ENCODE measurements at regions of chr1 and their contacts with region 1.

Region 1: GRCh38 chr1:31955917-31956736 is 18.0 kb upstream of the PTP4A2 start:
- DNase-seq: peak; percentile 86

Region 2: DNA sequence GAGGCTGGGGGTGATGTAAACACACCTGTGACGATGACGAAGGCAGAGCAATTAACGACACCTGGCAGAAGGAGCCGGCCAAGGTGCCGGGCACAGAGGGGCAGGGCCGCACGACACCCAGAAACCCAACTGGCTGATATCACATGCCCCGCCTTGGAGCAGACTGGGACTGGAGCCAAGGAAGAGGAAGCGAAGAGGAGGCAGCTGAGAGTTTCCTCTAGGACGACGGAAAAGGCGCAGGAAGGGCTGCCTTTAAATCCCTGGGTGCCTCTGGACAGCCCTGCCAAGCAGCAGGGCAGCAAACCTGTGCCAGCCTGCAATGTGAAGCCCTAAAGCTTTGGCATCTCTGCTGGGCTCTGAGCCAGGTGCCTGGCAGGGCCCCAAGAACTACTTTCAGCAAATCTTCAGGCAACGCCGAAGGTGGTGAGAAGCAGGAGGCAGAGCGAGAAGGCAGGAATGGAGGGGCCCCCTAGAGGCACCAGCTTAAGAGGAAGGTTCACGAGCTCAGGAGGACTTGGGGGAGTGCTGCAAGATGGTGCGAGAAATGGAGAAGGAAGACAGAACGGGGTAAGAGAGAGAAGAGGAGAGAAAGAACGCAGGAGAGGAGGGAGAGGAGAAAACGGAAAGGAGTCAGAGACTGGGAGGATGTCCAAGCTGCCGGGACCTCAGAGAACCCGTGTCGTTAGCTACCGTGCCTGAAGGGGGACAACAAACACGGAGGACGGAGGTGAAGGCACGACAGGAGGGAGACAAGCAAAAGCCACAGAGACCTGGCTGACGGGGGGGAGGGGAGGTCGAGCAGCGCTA is 286.1 kb before region 1 on chr1:
- intact Hi-C with region 1: loop called (anchors 5 kb)
- DNase-seq: peak; percentile 80

Measured in cardiac septum (tissue), 1 donor.